Activated CD4-positive, alpha-beta T cell treated with anti-CD3 and anti-CD28 coated beads for 36 hours (primary cell): ENCODE measurements at regions of chr6 and their contacts with region 1.

Region 1: GRCh38 chr6:57316581-57317059 is 810 bp upstream of the PRIM2 start:
- DNase-seq: peak; percentile 90
- ATAC-seq: peak; percentile 88
- H3K4me3 Mint-ChIP-seq: peak overlapping the region; percentile 99
- H3K27ac Mint-ChIP-seq: peak overlapping the region; percentile 98
- H3K4me1 Mint-ChIP-seq: peaks cover 31% of the 10 kb centered on the region
- H3K27me3 Mint-ChIP-seq: no peaks in the 10 kb centered on the region

Region 2: DNA sequence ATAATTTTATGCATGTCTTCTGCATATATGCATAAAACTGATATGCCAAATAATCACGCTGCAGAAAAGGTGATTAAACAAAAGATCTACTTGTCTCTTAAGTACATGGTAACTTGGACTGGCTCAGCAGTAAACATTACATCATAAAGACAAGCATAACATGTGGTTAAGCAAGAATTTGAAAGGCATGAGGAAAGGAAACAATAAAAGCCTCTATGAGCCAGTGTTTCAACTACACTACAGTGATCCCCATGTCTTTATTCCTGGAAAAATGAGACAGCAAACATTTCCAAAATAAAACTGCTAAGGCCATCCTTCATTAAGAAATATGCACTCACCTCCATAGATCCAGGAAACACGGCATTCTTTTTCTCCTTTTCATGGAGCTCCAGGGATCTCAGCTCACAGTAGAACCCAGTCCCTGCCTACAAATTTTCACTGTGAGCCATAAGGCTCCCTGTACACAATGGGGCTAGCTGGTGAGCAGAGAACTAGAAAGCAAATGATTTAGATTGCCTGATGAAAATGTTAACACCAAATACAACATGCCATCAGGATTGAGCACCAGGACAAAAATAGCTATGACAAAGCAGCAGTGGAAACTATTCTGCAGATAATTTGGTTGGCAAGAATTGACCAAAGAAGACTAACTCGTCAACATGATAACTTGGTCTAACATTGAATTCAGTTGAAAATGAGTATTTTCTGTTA is 1225.3 kb before region 1 on chr6:
- CTCF ChIA-PET with region 1: no interaction called
- POLR2A ChIA-PET with region 1: no interaction called
- intact Hi-C with region 1: no loop called
- DNase-seq: no peak
- ATAC-seq: no peak
- H3K4me3 Mint-ChIP-seq: no peak overlapping the region
- H3K27ac Mint-ChIP-seq: no peak overlapping the region
- H3K4me1 Mint-ChIP-seq: no peaks in the 10 kb centered on the region
- H3K27me3 Mint-ChIP-seq: no peaks in the 10 kb centered on the region

Region 3: GRCh38 chr6:56595490-56596122 is 721.0 kb before region 1 on chr6:
- CTCF ChIA-PET with region 1: no interaction called
- POLR2A ChIA-PET with region 1: no interaction called
- intact Hi-C with region 1: loop called in 1 of 2 experiments (anchors 5 kb)
- DNase-seq: peak; percentile 72
- ATAC-seq: peak; percentile 65
- H3K4me3 Mint-ChIP-seq: no peak overlapping the region
- H3K27ac Mint-ChIP-seq: no peak overlapping the region
- H3K4me1 Mint-ChIP-seq: peaks cover 34% of the 10 kb centered on the region
- H3K27me3 Mint-ChIP-seq: no peaks in the 10 kb centered on the region

Region 4: GRCh38 chr6:56902641-56903464 is 413.8 kb before region 1 on chr6:
- CTCF ChIA-PET with region 1: interaction called, 80 read pairs
- POLR2A ChIA-PET with region 1: no interaction called
- intact Hi-C with region 1: loop called (anchors 1 kb)
- DNase-seq: no peak
- ATAC-seq: no peak
- H3K4me3 Mint-ChIP-seq: no peak overlapping the region
- H3K27ac Mint-ChIP-seq: no peak overlapping the region
- H3K4me1 Mint-ChIP-seq: no peaks in the 10 kb centered on the region
- H3K27me3 Mint-ChIP-seq: peaks cover 9% of the 10 kb centered on the region

Region 5: DNA sequence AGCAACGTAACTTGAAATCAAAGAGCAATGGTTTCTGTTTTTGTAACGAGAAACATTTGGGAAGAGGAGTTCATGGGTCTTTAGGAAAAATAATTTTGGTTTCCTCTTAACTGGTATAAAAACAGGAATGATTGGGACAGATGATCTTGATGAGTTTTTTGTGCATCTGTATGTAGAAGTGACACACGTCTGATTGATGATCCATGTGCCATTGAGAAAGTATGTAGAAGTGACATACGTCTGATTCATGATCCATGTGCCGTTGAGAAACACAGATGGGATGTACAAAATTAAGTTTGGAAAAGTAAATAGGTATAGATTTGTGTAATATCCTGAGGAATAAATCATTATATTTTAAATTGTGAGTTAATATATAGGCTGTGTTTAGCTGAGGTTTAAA is 268.0 kb before region 1 on chr6:
- CTCF ChIA-PET with region 1: no interaction called
- POLR2A ChIA-PET with region 1: no interaction called
- intact Hi-C with region 1: loop called (anchors 1 to 2 kb)
- DNase-seq: no peak
- ATAC-seq: no peak
- H3K4me3 Mint-ChIP-seq: peak overlapping the region; percentile 63
- H3K27ac Mint-ChIP-seq: peak overlapping the region; percentile 40
- H3K4me1 Mint-ChIP-seq: peaks cover 28% of the 10 kb centered on the region
- H3K27me3 Mint-ChIP-seq: peaks cover 9% of the 10 kb centered on the region

Region 6: DNA sequence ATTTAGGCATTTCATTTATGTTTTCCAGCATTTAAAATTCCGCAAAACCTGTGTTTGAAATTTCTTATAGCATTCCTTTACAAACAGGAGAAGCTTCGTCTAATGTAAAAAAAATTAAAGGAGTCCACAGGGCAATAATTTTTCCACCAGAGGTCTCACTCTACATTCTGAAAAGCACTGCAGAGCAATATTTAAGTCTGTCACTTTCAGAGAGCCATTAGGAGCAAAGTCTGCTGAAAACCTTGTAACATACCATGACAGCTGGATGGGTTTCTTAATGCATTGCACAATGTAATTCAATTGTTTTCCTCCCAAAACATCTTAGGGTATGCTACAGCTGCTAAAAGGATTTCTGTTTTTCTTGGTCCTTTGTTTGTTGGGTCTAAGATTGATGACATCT is 126.5 kb before region 1 on chr6:
- CTCF ChIA-PET with region 1: interaction called, 4 read pairs
- POLR2A ChIA-PET with region 1: no interaction called
- intact Hi-C with region 1: loop called (anchors 1 to 5 kb)
- DNase-seq: no peak
- ATAC-seq: no peak
- H3K4me3 Mint-ChIP-seq: no peak overlapping the region
- H3K27ac Mint-ChIP-seq: no peak overlapping the region
- H3K4me1 Mint-ChIP-seq: no peaks in the 10 kb centered on the region
- H3K27me3 Mint-ChIP-seq: no peaks in the 10 kb centered on the region

Region 7: DNA sequence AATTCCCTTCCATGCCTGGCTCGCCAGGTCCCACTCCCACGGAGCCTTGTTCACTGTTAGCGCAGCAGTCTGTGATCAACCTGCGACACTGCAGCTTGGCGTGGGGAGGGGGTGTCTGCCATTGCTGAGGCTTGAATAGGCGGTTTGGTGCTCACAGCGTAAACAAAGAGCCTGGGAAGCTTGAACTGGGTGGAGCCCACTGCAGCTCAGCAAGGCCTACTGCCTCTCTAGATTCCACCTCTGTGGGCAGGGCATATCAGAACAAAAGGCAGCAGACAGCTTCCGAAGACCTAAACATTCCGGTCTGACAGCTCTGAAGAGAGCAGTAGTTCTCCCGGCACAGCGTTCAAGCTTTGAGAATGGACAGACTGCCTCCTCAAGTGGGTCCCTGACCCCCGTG is 28.5 kb before region 1 on chr6:
- CTCF ChIA-PET with region 1: no interaction called
- POLR2A ChIA-PET with region 1: no interaction called
- intact Hi-C with region 1: no loop called
- DNase-seq: no peak
- ATAC-seq: no peak
- H3K4me3 Mint-ChIP-seq: no peak overlapping the region
- H3K27ac Mint-ChIP-seq: no peak overlapping the region
- H3K4me1 Mint-ChIP-seq: no peaks in the 10 kb centered on the region
- H3K27me3 Mint-ChIP-seq: peaks cover 30% of the 10 kb centered on the region